ENCODE measurements at regions of chr13 and their contacts with region 1.

Region 1: GRCh38 chr13:94620286-94620896 is 18.7 kb downstream of the GPR180 start:
- DNase-seq: no peak

Region 2: GRCh38 chr13:94435604-94436226 is 184.7 kb before region 1 on chr13:
- intact Hi-C with region 1: loop called (anchors 5 kb)
- DNase-seq: no peak

Measured in posterior vena cava (tissue), 2 donors.